ENCODE measurements at regions of chr17 and their contacts with region 1.

Region 1: DNA sequence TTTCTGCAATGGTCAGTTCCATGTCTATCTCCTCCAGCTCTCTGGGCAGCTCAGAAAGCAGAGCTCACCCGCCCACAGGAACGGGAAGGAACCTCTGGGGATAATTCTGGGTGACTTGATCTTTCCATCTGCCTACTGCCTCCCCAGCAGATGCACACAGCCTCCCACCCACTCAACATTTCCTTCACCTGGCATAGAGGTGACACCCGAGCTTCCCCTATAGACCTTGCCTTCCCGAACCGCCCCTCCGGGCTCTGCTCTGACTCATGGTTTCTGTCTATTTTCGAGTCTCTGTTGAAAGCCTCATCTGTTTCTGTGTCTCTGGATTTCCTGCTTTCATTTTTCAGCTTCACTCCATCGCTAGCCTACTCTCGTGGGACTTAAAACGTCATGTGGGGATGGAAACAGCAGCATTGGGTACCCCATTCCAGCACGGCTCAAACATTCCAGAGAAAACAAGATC is 11.4 kb downstream of the GGA3 start:
- H3K4me3 ChIP-seq: no peak overlapping the region
- H3K27ac ChIP-seq: peak overlapping the region; percentile 3; the same call in 1 of the 2 replicates
- H3K4me1 ChIP-seq: peaks cover 6% of the 10 kb centered on the region
- CTCF ChIP-seq: no peak

Region 2: DNA sequence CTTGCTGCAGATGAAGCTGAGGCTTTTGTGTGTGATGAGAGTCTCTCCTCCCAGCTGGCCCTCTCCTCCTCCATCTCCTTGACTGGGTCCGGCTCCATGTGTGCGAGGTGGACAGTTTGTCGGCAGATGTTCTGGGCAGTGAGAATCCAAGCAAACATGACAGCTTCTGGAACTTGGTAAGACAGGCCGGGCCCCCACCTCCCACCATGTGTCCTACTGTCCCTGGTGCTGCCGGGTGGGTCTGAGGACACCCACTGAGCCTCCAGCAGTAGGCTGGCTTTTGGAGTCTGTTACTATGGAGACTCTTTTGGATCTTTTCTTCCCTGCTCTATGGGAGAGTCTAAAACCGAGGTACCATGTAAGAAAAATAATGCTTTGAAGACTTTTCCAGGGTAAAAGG is 31.9 kb before region 1 on chr17:
- CTCF ChIA-PET with region 1: no interaction called
- POLR2A ChIA-PET with region 1: no interaction called
- H3K4me3 ChIP-seq: no peak overlapping the region
- H3K27ac ChIP-seq: no peak overlapping the region
- H3K4me1 ChIP-seq: no peaks in the 10 kb centered on the region
- CTCF ChIP-seq: no peak

Region 3: GRCh38 chr17:75261336-75262111 is 11.5 kb after region 1 on chr17 and contains the starts of genes GGA3 and MRPS7:
- CTCF ChIA-PET with region 1: interaction called, 8 read pairs
- POLR2A ChIA-PET with region 1: interaction called, 12 read pairs
- H3K4me3 ChIP-seq: peak within 1 kb of the TSS; percentile 99
- H3K27ac ChIP-seq: peak within 1 kb of the TSS; percentile 99
- H3K4me1 ChIP-seq: peaks cover 5% of the 10 kb centered on the region; the same call in 1 of the 2 replicates
- CTCF ChIP-seq: peak; percentile 42; the same call in 1 of the 2 replicates